Dendritic cell treated with granulocyte-macrophage colony-stimulating factor and Interleukin-4, amounts not matched to agents 40 ng/mL and 50 ng/mL, for 4 days (primary cell): ENCODE measurements at regions of chr18 and their contacts with region 1.

Region 1: DNA sequence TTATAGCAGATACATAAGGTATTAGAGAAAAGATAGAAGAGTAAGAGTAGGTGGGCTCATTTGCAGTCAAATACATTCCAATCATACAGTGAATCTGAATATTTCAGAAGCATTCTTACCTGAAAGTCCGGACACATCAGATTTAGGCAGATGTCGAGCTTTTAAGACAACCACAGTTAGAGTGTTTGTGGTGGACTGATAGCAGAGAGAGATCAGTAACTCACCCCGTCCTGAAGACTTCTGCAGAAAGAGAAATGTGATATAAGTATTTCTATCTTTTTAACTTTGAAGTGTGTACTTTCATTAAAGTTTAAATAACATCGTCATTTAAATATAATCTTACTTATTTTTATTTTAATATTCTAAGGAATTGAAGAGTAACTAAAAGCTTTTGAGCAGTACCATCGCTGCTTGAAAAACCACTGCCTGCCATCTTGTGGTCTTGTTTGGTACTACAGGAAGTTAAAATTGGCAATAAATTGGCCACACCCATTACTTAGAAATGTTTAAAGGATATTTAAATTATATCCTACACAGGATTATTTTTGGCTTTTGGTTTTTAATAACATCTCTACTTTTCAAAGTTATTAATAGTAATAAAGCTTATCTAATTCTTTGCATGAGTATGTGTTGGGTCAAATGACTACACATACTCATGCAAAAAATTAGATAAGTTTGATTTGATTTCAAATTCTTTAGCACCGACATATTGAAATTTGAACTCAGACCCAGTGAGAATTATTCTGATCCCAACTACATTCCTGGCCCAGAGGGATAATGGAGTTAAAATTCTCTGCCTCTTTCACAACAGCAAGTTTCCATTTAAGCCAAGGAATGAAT is 5.5 kb downstream of the SYT4 start:
- H3K4me3 Mint-ChIP-seq: no peak overlapping the region
- H3K27ac Mint-ChIP-seq: no peak overlapping the region
- H3K4me1 Mint-ChIP-seq: no peaks in the 10 kb centered on the region
- H3K27me3 Mint-ChIP-seq: no peaks in the 10 kb centered on the region

Region 2: DNA sequence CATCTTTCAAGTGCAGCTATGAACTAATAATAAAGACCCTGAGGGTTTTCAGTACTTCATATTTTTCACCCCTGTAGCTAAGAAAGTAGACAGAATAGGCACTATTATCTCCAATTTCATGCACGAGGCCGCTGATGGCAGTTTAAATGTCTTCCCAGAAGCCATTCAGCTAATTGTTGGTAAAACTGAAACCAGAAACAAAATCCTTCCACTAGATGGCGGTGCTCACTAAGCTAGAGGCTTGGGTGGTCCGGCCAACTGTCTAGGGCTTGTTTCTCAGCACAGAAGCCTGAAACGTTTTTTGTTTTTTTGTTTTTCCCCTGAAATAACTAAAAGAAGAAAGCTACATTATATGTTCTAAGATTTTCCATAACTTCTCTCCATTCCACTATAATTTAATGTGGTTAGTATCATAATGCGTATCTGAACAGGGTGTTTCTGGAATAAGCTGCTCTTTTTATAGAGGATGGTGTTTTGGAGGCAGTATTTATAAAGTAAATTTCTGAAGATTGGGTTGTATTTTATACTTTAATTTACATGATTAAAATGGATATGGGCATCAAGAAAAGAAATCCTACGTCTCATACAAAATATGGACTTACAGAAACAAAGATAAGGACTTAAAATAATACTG is 1157.4 kb before region 1 on chr18:
- intact Hi-C with region 1: loop called (anchors 1 kb)
- H3K4me3 Mint-ChIP-seq: no peak overlapping the region
- H3K27ac Mint-ChIP-seq: no peak overlapping the region
- H3K4me1 Mint-ChIP-seq: peaks cover 9% of the 10 kb centered on the region
- H3K27me3 Mint-ChIP-seq: no peaks in the 10 kb centered on the region

Region 3: GRCh38 chr18:42298759-42299675 is 972.8 kb before region 1 on chr18:
- intact Hi-C with region 1: loop called (anchors 2 kb)
- H3K4me3 Mint-ChIP-seq: no peak overlapping the region
- H3K27ac Mint-ChIP-seq: no peak overlapping the region
- H3K4me1 Mint-ChIP-seq: no peaks in the 10 kb centered on the region
- H3K27me3 Mint-ChIP-seq: no peaks in the 10 kb centered on the region

Region 4: DNA sequence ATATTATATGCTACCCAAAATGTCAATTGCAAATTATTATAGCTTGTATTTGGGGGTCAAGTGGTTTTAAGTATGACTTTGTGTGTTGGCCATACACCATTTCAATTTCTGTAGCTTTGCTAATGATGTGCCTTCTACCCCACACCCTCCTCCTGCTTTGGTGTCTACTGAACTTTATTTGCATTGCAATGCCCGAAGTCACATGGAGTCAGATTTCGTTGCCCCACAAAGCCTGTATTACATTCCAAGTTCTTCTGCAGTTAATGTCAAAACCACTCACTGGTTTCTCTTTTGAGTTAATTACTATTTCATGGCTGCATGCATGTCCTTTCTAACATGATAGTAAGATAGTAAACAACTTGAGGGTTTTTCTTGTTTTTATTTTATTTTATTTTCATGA is 685.2 kb before region 1 on chr18:
- intact Hi-C with region 1: loop called (anchors 10 kb)
- H3K4me3 Mint-ChIP-seq: no peak overlapping the region
- H3K27ac Mint-ChIP-seq: no peak overlapping the region
- H3K4me1 Mint-ChIP-seq: no peaks in the 10 kb centered on the region
- H3K27me3 Mint-ChIP-seq: no peaks in the 10 kb centered on the region